ENCODE measurements at regions of chr12 and their contacts with region 1.

Region 1: DNA sequence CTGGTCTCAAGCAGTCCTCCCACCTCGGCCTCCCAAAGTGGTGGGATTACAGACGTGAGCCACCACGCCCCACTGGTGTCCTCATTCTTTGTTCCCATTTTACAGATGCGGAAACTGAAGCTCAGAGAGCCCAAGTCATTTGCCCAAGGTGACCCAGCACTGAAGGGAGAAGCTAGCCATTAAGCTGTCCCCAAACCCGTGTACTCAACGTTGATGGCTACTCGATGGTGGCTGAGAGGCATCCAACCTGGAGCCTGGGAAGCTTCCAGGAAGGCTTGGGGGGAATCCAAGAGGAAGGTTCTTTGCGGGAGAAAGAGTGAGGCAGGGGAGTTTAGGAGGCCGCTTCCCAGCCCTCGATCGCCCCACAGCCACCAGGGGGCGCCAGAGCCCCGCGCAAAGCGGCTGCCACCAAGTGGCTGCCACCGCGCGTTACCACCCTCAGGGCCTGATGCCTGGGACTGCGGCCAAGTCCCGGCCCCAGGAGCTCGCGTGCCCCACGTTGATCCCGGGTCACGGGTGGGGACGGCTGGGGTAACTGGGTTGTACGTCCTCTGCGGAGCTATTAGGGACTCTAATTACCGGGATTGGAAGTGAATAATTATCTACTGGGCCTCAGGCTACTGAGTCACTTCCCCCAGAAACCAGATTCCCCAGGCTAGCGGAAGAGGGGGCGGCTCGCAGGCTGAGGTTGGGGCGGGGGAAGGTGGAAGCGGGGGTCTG is 8.8 kb upstream of the SH2B3 start:
- DNase-seq: peak; percentile 88 to 95 (median 94)
- ATAC-seq: peak; percentile 85 to 89
- H3K4me3 ChIP-seq: no peak overlapping the region
- H3K27ac ChIP-seq: no peak overlapping the region
- H3K4me1 ChIP-seq: no peaks in the 10 kb centered on the region
- H3K27me3 ChIP-seq: no peaks in the 10 kb centered on the region

Region 2: DNA sequence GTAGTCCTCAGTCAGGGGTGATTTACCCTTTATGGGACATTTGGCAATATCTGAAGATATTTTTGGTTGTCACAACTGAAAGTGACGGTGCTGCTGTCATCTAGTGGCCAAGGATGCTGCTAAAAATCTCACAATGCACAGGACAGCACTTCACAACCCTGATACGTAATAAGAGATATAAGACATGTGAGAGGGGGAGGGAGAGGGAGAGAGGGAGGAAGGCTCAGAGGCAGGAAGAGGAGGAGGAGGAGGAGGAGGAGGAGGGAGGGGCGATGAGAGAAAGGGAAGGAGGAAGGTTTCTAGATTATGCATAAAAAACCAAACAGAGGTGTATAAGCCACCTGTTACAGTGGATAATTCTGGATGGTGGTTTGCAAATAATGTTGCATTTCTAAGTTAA is 490.8 kb before region 1 on chr12:
- intact Hi-C with region 1: no loop called
- DNase-seq: no peak
- ATAC-seq: no peak
- H3K4me3 ChIP-seq: no peak overlapping the region
- H3K27ac ChIP-seq: no peak overlapping the region
- H3K4me1 ChIP-seq: no peaks in the 10 kb centered on the region
- H3K27me3 ChIP-seq: no peaks in the 10 kb centered on the region

Region 3: GRCh38 chr12:111451649-111452129 is 54.8 kb after region 1 on chr12:
- intact Hi-C with region 1: loop called (anchors 2 to 5 kb)
- DNase-seq: peak in 1 of 3 donors; percentile 50
- ATAC-seq: no peak
- H3K4me3 ChIP-seq: no peak overlapping the region
- H3K27ac ChIP-seq: no peak overlapping the region
- H3K4me1 ChIP-seq: peaks cover 5% of the 10 kb centered on the region
- H3K27me3 ChIP-seq: no peaks in the 10 kb centered on the region

Region 4: DNA sequence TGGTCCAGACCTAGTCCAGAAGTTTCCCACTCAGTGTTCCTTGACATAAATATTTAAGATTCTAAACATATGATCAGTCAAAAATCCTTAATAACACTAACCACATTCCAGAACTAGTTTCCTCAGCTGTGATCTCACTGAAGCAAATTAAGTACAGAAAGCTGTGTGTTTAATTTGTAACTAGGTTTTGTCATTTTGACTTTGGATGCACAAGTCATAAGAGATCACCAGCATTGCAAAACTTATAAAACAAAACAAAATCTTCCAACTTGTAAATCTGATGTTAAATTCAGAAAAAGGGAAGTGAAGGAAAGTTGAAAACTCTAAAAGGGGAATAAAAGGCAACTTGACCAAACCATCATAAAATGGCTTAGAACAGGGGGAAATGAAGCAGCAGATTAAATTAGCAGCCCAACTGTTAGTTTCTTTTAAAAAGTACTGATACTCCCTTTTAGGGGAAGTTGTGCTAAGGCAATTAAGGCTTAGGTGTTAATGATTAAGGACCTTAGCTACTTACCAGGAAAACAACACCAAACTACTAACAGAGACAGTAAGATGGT is 65.4 kb after region 1 on chr12:
- intact Hi-C with region 1: no loop called
- DNase-seq: no peak
- ATAC-seq: no peak
- H3K4me3 ChIP-seq: no peak overlapping the region
- H3K27ac ChIP-seq: no peak overlapping the region
- H3K4me1 ChIP-seq: no peaks in the 10 kb centered on the region
- H3K27me3 ChIP-seq: no peaks in the 10 kb centered on the region

Region 5: DNA sequence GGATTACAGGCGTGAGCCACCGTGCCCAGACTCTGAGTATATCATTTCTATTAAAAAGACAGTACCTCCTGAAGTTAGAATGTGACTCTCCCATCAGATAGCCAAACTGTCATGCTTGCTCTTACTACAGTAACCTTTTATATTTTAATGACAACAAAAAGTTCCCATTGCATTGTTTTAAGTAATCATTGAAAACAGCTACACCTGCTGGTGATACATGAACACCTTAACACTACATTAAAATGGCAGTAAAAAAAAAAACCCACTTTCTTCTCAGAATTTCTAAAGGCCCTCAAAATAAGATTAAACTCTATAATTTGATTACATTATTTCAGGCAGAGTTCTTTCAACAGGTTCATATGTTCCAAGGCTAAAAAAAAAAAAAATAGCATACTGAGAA is 85.6 kb after region 1 on chr12:
- intact Hi-C with region 1: no loop called
- DNase-seq: no peak
- ATAC-seq: no peak
- H3K4me3 ChIP-seq: no peak overlapping the region
- H3K27ac ChIP-seq: no peak overlapping the region
- H3K4me1 ChIP-seq: no peaks in the 10 kb centered on the region
- H3K27me3 ChIP-seq: no peaks in the 10 kb centered on the region

Region 6: DNA sequence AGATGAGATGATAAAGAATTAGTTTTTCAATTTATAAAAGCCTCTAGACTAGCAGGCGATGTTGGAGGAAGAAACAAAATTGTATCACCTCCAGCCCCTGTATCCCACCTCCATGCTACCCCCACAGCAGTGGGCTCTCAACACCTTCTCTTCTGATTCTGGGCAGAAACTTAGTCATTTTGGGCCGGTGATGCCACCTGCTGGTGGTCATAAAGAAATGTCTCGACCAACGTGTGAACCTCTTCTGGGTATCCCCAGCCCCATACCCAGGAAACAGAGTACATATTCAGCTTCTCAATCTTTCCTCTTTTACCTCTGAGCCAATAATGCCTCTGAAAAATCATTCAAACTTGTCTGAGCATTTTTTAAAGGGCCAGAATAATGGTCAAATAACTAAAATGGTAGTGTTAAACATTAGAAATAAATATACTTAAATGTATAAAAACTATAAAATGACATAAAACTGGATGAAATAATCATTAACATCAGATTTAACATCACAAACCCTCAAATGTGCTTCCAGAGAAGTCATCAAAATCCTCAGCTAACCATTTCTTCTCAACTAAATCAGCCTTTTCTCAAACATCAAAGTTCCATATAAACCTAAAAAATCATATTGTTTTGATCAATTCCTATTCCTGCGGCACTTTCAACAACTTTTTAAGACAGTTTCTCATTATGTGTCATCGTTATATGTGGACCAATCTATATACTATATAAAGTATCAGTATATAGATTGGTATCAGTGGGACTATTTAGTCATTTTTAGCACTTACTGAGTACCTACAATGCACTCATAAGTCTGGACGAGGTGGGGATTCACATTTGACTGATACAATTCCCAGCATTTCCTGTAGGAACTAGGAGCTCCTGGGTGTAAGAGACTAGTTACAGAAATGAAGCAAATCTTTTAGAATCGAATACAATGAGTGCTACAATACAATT is 132.8 kb after region 1 on chr12:
- intact Hi-C with region 1: loop called in 1 of 4 experiments (anchors 10 kb)
- DNase-seq: peak in 1 of 3 donors; percentile 29
- ATAC-seq: peak; percentile 41 to 63
- H3K4me3 ChIP-seq: no peak overlapping the region
- H3K27ac ChIP-seq: no peak overlapping the region
- H3K4me1 ChIP-seq: no peaks in the 10 kb centered on the region
- H3K27me3 ChIP-seq: no peaks in the 10 kb centered on the region

Region 7: GRCh38 chr12:111584959-111585358 is 188.1 kb after region 1 on chr12:
- intact Hi-C with region 1: no loop called
- DNase-seq: no peak
- ATAC-seq: no peak
- H3K4me3 ChIP-seq: no peak overlapping the region
- H3K27ac ChIP-seq: no peak overlapping the region
- H3K4me1 ChIP-seq: peaks cover 14% of the 10 kb centered on the region
- H3K27me3 ChIP-seq: no peaks in the 10 kb centered on the region

Measured in right cardiac atrium (tissue), 5 donors.